A549 (cell line): ENCODE measurements at regions of chr17 and their contacts with region 1.

Region 1: GRCh38 chr17:16058331-16058730 is 58.7 kb downstream of the TTC19 start:
- DNase-seq: no peak
- ATAC-seq: no peak
- H3K4me3 ChIP-seq: no peak overlapping the region
- H3K27ac ChIP-seq: no peak overlapping the region
- H3K4me1 ChIP-seq: no peaks in the 10 kb centered on the region
- CTCF ChIP-seq: no peak
- EP300 ChIP-seq: no peak
- POLR2A ChIP-seq: no peak
- RAD21 ChIP-seq: no peak

Region 2: GRCh38 chr17:16027708-16028584 is 30.4 kb before region 1 on chr17:
- CTCF ChIA-PET with region 1: no interaction called
- POLR2A ChIA-PET with region 1: no interaction called
- DNase-seq: peak; percentile 92 to 95
- ATAC-seq: peak; percentile 95 to 96
- H3K4me3 ChIP-seq: peak overlapping the region; percentile 15; the same call in 2 of the 3 replicates
- H3K27ac ChIP-seq: peak overlapping the region; percentile 85 to 86
- H3K4me1 ChIP-seq: peaks cover 31% of the 10 kb centered on the region
- CTCF ChIP-seq: no peak
- EP300 ChIP-seq: peak in 1 of 2 experiments; percentile 60; a peak in 1 of 5 replicates
- POLR2A ChIP-seq: no peak
- RAD21 ChIP-seq: peak in 1 of 2 experiments; percentile 20; a peak in 1 of 5 replicates

Region 3: GRCh38 chr17:16044487-16044886 is 13.8 kb before region 1 on chr17:
- CTCF ChIA-PET with region 1: interaction called, 16 read pairs
- POLR2A ChIA-PET with region 1: interaction called, 6 read pairs
- DNase-seq: no peak
- ATAC-seq: peak in 1 of 2 experiments; percentile 16; a peak in 2 of 6 replicates
- H3K4me3 ChIP-seq: no peak overlapping the region
- H3K27ac ChIP-seq: no peak overlapping the region
- H3K4me1 ChIP-seq: no peaks in the 10 kb centered on the region
- CTCF ChIP-seq: no peak
- EP300 ChIP-seq: no peak
- POLR2A ChIP-seq: no peak
- RAD21 ChIP-seq: no peak